ENCODE measurements at regions of chr20 and their contacts with region 1.

Region 1: GRCh38 chr20:35994994-35995453 is 26.6 kb downstream of the CNBD2 start:
- DNase-seq: peak; percentile 85 to 86
- ATAC-seq: peak; percentile 91 to 96 (median 96)
- H3K4me3 ChIP-seq: no peak overlapping the region
- H3K27ac ChIP-seq: peak overlapping the region in 1 of 10 donors; percentile 12
- H3K4me1 ChIP-seq: peaks cover 0 to 8% (median 0%) of the 10 kb centered on the region in 9 donors
- H3K27me3 ChIP-seq: no peaks in the 10 kb centered on the region
- CTCF ChIP-seq: peak; percentile 67 to 95 (median 93)

Region 2: GRCh38 chr20:35947489-35947888 is 47.5 kb before region 1 on chr20:
- intact Hi-C with region 1: no loop called
- DNase-seq: no peak
- ATAC-seq: peak in 2 of 8 donors; percentile 10 to 38
- H3K4me3 ChIP-seq: no peak overlapping the region
- H3K27ac ChIP-seq: peak overlapping the region in 1 of 10 donors; percentile 50
- H3K4me1 ChIP-seq: peaks cover 3 to 31% (median 10%) of the 10 kb centered on the region in 9 donors
- H3K27me3 ChIP-seq: no peaks in the 10 kb centered on the region
- CTCF ChIP-seq: peak in 4 of 9 donors; percentile 18 to 29 (median 28)

Region 3: DNA sequence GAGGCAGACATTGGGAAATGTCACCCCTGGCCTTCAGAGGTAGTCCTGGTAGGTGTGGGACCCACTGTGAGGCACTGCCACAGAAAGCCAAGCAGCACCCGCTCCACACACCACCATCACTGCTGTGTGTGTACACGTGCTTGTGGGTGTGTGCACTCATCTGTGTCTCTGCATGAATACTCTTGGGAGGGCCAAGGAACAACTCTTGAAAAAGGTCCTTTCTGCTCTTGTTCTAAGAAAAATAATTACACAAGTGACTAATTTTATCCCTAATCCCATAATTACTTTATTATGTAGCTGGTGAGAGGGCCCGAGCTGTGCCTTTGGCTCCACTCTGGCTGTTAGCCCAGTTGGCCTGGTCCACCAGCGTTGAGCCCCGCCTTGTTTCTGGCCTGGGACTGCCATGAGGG is 137.8 kb after region 1 on chr20:
- intact Hi-C with region 1: loop called (anchors 1 to 5 kb)
- DNase-seq: no peak
- ATAC-seq: no peak
- H3K4me3 ChIP-seq: no peak overlapping the region
- H3K27ac ChIP-seq: no peak overlapping the region
- H3K4me1 ChIP-seq: peaks cover 0 to 3% (median 0%) of the 10 kb centered on the region in 9 donors
- H3K27me3 ChIP-seq: no peaks in the 10 kb centered on the region
- CTCF ChIP-seq: no peak

Region 4: GRCh38 chr20:36199345-36200257 is 204.6 kb after region 1 on chr20:
- intact Hi-C with region 1: loop called in 8 of 10 experiments (anchors 1 to 10 kb)
- DNase-seq: peak; percentile 65 to 81
- ATAC-seq: peak; percentile 57 to 83 (median 76)
- H3K4me3 ChIP-seq: no peak overlapping the region
- H3K27ac ChIP-seq: no peak overlapping the region
- H3K4me1 ChIP-seq: peaks cover 0 to 20% (median 0%) of the 10 kb centered on the region in 9 donors
- H3K27me3 ChIP-seq: no peaks in the 10 kb centered on the region
- CTCF ChIP-seq: peak; percentile 85 to 95 (median 92)

Region 5: GRCh38 chr20:36439040-36439730 is 444.2 kb after region 1 on chr20:
- intact Hi-C with region 1: loop called in 2 of 10 experiments (anchors 5 to 10 kb)
- DNase-seq: peak; percentile 56 to 64
- ATAC-seq: peak in 7 of 8 donors; percentile 42 to 76 (median 62)
- H3K4me3 ChIP-seq: no peak overlapping the region
- H3K27ac ChIP-seq: no peak overlapping the region
- H3K4me1 ChIP-seq: peaks cover 0 to 14% (median 3%) of the 10 kb centered on the region in 9 donors
- H3K27me3 ChIP-seq: peaks cover 0 to 28% (median 21%) of the 10 kb centered on the region in 7 donors
- CTCF ChIP-seq: peak; percentile 57 to 91 (median 84)